Mammary epithelial cell (primary cell): ENCODE measurements at regions of chr1 and their contacts with region 1.

Region 1: DNA sequence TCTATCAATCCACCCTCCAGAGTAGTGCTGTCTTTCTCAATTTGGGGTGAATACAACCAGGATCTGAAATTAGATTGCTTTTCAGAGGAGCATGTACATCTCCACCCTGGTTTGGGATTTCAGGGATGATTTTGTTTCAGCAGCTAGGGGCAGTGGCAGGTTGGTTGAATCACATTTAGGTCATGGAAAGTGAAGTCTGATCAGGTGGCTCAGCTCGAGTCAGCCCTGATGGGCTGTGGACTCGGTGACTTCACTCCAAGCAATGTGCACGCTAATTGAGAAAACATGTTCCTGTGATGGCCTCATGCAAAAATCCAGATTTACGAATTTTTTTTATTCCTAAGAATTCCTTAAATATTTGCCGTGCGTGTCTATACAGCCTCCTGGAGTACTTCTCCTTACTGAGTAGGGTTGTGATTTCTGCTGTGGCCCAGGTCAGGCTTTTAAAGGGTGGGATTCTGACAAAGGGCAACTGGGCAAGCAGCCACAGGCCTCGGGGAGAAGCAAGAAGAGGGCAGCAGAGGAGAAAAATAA is 7.5 kb downstream of the NGF start:
- DNase-seq: peak; percentile 62
- H3K4me3 ChIP-seq: no peak overlapping the region
- H3K27ac ChIP-seq: no peak overlapping the region
- H3K4me1 ChIP-seq: no peaks in the 10 kb centered on the region
- H3K27me3 ChIP-seq: no peaks in the 10 kb centered on the region
- CTCF ChIP-seq: peak in 1 of 2 donors; percentile 24

Region 2: DNA sequence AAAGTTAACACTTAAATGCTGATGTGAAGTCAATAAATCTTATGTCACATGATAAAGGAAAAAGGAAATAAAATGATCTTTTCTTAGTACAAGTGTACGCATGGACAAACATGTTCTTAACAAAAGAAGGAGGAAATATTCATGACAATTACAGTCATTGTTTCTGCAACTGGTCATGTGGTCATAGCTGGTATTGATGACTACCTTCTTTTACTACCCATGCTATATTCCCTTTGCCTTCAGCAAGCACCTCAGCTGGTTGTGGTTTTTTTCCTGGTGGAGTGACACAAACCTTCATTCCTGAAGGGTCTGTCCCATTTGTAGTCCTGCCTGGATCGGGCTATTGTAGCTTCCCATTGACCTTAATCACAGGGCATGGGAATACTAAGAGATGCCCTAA is 324.4 kb before region 1 on chr1:
- CTCF ChIA-PET with region 1: no interaction called
- dilution Hi-C with region 1: no loop called
- in situ Hi-C with region 1: no loop called
- intact Hi-C with region 1: no loop called
- DNase-seq: peak; percentile 78
- H3K4me3 ChIP-seq: no peak overlapping the region
- H3K27ac ChIP-seq: no peak overlapping the region
- H3K4me1 ChIP-seq: no peaks in the 10 kb centered on the region
- H3K27me3 ChIP-seq: no peaks in the 10 kb centered on the region
- CTCF ChIP-seq: no peak

Region 3: GRCh38 chr1:115286431-115287205 is 43.9 kb before region 1 on chr1:
- CTCF ChIA-PET with region 1: no interaction called
- dilution Hi-C with region 1: no loop called
- in situ Hi-C with region 1: no loop called
- intact Hi-C with region 1: no loop called
- DNase-seq: no peak
- H3K4me3 ChIP-seq: no peak overlapping the region
- H3K27ac ChIP-seq: no peak overlapping the region
- H3K4me1 ChIP-seq: peaks cover 3% of the 10 kb centered on the region
- H3K27me3 ChIP-seq: peaks cover 4% of the 10 kb centered on the region
- CTCF ChIP-seq: no peak

Region 4: DNA sequence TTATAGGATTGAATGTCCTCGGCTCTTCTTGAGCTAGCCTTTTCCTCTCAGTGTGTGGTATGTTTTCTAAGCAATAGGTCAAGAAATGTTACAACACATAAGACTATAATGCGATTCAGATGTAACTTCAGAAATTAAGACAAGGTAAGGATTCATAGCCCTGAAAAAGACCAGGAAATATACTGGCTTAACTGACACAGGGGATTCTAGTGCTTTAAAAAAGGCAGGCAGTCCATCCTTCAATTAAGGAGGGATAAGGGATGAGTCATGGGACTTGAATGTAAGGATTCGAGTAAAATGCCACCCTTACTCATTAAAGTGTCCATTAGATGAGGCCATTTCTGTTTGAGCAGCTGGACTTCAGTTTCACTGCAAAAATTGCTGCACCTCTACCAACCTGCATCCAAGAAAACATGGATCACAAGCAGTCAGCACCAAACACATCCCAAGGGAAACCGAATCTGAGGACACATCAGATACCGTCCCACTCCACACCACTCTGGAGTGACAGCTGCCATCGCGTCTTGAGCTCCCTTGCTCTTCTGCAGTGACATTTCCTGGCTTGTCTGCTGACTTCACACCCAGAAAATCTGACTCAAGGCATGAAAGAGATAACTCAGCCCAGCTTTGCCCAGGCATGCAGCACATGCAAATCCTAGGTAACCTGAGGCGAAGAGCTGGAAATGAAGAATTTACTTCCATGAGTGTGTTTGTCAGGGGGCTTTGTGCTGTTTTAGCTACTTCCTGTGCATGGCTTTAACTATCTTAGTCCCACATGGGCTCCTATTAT is 30.3 kb before region 1 on chr1:
- CTCF ChIA-PET with region 1: no interaction called
- dilution Hi-C with region 1: no loop called
- in situ Hi-C with region 1: no loop called
- intact Hi-C with region 1: loop called (anchors 1 kb)
- DNase-seq: peak; percentile 85
- H3K4me3 ChIP-seq: no peak overlapping the region
- H3K27ac ChIP-seq: peak overlapping the region; percentile 58
- H3K4me1 ChIP-seq: peaks cover 41% of the 10 kb centered on the region
- H3K27me3 ChIP-seq: no peaks in the 10 kb centered on the region
- CTCF ChIP-seq: no peak

Region 5: GRCh38 chr1:115423776-115424175 is 93.2 kb after region 1 on chr1:
- CTCF ChIA-PET with region 1: no interaction called
- dilution Hi-C with region 1: no loop called
- in situ Hi-C with region 1: no loop called
- intact Hi-C with region 1: no loop called
- DNase-seq: no peak
- H3K4me3 ChIP-seq: no peak overlapping the region
- H3K27ac ChIP-seq: no peak overlapping the region
- H3K4me1 ChIP-seq: peaks cover 19% of the 10 kb centered on the region
- H3K27me3 ChIP-seq: no peaks in the 10 kb centered on the region
- CTCF ChIP-seq: no peak

Region 6: DNA sequence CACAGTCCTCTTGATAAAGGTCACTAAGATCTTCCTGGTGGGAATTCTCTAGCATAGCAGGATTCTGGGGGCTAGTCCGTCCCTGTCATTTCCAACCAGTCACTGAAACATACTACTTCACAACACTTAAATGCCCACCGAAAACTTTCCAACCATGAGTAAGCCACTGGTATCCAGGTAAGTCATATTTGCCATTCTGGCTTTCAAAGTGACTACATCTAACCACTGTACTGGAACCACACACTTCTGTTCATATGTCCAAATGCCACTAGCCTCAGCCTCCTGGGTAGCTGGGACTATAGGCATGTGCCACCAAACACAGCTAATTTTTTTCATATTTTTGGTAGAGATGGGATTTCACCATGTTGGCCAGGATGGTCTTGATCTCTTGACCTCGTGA is 247.0 kb after region 1 on chr1:
- CTCF ChIA-PET with region 1: no interaction called
- dilution Hi-C with region 1: no loop called
- in situ Hi-C with region 1: no loop called
- intact Hi-C with region 1: no loop called
- DNase-seq: no peak
- H3K4me3 ChIP-seq: no peak overlapping the region
- H3K27ac ChIP-seq: no peak overlapping the region
- H3K4me1 ChIP-seq: no peaks in the 10 kb centered on the region
- H3K27me3 ChIP-seq: no peaks in the 10 kb centered on the region
- CTCF ChIP-seq: no peak